ENCODE measurements at regions of chr20 and their contacts with region 1.

Region 1: GRCh38 chr20:53738039-53738944 is 144.7 kb upstream of the ZNF217 start:
- DNase-seq: peak; percentile 70
- ATAC-seq: peak; percentile 84

Region 2: DNA sequence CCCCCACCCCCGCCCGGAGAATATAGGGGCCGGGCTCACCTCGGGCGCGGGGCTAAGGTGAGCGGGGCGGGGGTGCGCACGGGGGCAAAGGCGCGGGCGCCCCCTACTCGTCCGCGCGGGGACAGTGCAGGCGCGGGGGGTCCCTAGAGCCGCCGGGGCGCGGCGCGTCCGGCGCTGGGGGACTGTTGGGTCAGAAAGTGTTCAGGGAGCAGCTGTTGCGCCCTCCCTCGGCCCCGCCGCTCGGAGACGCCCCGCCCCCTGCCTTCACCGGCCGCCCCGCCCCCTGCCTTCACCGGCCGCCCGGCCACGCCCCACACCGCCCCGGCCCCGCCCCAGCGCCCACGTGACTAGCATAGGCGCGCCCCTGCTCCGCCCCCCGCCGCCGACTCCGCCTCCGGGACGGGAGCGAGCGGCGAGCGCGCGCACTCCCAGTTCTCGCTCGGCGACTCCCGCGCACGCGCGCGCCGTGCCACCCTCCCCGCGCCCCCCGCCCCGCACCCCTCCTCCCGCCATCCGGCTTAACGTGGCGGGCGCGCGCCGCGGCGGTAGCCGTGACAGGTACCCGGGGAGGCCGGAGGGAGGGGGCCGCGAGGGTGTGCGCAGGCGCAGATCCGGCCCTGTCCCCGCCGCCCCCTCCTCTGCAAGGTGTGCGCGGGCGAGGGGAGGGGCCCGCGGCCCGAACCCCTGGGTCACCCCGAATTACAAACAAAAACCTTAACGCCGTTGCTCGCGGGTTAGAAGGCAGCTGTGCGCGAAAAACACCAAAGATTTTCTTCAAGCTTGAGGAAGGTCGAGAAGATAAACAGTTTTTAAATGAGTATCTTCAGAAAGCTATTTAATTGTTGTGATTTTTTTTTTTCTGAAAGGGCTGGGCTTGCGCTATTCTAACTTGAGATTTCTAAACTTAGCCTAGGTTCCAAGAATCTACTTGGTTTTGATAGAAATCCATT is 143.9 kb before region 1 on chr20:
- intact Hi-C with region 1: loop called (anchors 5 kb)
- DNase-seq: peak; percentile 98
- ATAC-seq: peak; percentile 91

Region 3: DNA sequence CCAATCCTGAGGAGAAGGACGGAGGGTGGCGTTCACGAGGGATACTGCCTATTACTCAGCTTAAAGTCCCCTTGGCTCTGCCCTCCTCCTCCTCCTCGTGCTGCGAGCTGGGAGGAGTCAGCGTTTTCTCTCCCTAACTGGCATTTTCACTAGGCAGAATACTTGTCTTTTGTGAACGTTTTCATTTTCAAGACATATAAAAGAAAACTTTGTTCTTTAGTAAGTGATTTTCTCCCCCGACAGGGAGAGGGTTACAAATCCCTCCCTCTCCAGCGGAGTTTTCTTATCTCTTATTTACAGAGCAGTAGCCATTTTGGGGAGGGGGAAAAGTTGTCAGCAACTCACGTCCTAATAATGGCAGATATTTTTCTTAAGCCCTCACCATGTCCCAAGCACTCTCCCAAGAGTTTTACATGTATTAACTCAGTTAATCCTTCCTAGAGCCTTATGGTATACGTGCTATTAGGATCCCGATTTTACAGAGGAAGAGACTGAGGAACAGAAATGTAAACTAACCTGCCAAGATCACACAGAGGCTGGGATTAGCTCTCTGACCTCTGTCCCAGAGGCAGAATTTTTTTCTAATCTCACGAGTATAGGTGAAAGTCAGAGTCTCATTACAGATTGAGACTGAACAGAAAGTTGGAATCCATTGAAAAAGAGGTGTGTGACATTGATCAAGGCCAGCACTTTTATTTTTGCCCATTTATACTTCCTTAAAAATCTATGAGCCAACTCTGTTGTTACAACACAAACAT is 114.7 kb before region 1 on chr20:
- intact Hi-C with region 1: loop called (anchors 10 kb)
- DNase-seq: peak; percentile 70
- ATAC-seq: peak; percentile 91

Region 4: DNA sequence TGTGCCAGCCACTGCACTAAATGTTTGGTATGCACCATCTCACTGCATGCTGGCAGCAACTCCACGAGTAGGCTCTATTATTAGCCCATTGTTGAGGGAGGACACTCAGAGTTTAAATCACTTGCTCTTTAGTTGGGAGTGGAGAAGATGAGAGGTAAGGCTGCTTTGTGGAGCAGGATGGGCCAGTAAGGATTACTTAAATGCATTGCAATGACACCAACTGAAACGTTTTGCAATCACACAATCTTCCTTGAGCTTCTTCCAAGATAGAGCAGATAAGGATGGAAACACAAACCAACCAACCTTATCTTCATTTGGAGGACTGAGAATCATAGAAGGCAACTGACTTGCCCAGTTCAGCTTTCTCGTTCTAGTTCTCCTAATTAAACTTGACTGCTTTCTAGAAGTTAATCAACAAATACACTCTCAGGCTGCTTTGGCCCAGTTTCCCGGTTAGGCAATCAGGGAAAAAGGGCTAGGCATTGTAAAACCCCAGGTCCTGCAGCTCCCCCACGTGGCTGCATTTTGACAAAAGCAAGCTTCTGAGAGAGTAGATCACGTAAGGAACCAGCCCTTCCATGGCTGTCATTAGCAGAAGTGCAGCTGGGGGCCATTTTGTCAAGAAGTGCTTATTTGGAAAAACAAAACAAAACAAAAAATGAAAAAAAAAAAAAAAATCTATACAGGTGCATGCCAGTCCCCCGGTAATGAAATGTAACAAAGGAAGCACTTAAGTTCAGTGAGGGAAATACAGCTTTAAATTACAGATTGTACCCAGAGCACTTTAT is 201.5 kb after region 1 on chr20:
- intact Hi-C with region 1: loop called (anchors 10 kb)
- DNase-seq: peak; percentile 96
- ATAC-seq: peak; percentile 94

Region 5: GRCh38 chr20:54726768-54727422 is 988.6 kb after region 1 on chr20:
- intact Hi-C with region 1: no loop called
- DNase-seq: no peak
- ATAC-seq: no peak